ENCODE measurements at regions of chr6 and their contacts with region 1.

Region 1: DNA sequence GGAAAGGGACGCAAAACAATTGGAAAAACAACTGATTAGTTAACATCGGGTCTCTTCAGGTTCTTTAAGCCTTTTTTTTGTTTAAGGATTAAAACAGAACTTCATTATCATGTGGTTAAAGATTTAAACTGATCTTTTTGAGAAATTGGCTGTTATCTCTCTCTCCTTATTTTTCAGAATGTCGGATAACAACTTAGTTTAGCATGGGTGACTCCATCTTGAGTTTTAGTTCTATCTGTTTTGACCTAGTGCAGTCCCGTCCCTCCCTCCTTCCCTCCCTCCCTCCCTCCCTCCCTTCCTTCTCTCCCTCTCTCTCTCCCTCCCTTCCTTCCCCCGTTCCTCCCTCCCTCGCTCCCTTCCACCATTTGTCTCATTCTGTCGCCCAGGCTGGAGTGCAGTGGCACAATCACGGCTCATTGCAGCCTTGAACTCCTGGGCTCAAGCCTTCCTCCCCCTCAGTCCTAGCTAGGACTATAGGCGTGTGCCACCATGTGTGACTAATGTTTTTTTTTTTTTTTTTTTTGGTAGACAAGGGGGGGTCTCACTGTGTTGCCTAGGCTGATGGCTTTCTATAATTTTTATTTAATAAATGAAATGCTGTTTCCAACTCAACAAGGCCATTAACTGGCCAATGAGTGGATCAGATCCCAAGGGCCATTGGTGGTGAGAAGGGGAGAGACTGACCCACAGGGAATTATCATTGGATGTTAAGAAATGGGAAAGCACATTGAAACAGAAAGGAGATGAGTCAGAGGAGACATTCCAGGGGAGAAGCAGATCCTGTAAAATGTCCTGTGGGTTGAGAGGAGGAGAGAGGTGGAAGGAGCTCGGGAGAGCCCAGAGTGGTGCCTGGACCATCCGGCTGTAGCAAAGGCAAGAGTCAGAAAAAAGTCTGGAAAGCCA is 13.6 kb downstream of the BAK1 start:
- DNase-seq: no peak
- H3K4me3 Mint-ChIP-seq: no peak overlapping the region
- H3K27ac Mint-ChIP-seq: no peak overlapping the region
- H3K4me1 Mint-ChIP-seq: peaks cover 30% of the 10 kb centered on the region
- H3K27me3 Mint-ChIP-seq: no peaks in the 10 kb centered on the region

Region 2: DNA sequence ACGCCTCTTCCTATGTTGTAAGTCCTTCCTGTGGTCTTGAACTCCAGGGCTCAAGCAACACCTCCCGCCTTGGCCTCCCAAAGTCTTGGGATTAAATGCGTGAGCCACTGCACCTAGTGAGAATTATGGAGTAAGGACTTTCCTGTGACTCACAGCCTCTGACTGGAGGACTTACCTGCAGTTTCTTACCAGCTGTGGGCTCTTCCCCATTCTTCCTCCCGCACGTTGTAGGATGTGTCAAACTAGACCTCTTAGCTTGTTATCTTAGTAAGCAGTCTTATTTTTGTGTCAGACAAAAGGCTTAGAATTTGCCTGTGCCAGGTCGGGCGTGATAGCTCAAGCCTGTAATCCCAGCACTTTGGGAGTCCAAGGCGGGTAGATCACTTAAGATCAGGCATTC is 17.2 kb before region 1 on chr6:
- CTCF ChIA-PET with region 1: interaction called, 13 read pairs
- POLR2A ChIA-PET with region 1: interaction called, 3 read pairs
- DNase-seq: no peak
- H3K4me3 Mint-ChIP-seq: no peak overlapping the region
- H3K27ac Mint-ChIP-seq: peak overlapping the region; percentile 27
- H3K4me1 Mint-ChIP-seq: peaks cover 27% of the 10 kb centered on the region
- H3K27me3 Mint-ChIP-seq: no peaks in the 10 kb centered on the region

Region 3: DNA sequence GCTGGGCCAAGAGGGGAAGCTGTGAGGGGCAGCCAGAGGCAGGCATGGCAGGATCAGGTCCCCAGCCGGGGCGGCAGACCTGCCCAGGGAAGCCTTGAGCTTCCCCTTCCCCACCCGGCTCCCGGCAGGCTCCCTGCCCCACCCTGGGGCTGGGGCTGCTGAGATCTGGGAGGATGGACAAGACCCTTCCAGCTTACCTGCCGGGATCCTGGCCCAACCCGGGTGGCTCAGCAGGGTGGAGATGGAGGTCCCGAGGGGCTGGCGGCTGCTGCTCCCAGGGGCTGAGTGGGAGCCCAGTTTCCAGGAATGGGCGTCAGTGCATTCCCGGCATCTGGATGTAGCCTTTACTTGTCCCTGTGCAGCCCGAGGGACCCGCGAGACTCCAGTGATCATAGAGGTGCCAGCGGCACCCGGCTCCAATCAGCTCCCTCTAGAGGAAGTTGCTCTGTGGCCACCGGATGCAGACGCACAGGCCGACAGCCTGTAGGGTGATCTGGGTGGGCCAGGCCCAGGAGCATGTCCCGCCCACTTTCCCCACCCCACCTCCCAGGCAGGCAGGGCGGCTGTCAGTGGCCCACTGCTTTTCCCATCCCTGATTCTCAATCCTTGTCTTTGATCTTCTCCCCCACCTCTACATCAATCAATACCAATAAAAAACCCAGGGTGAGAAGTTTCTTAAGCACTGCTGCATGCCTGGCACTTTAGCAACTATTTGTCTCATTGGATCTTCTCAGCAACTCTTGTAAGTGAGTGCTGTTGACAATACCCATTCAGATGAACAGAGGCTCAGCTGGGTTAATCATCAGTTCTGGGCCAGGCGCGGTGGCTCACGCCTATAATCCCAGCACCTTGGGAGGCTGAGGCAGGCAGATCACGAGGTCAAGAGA is 13.6 kb after region 1 on chr6 and contains the start of gene BAK1:
- CTCF ChIA-PET with region 1: interaction called, 7 read pairs
- POLR2A ChIA-PET with region 1: interaction called, 15 read pairs
- DNase-seq: peak; percentile 90
- H3K4me3 Mint-ChIP-seq: peak within 1 kb of the TSS; percentile 95
- H3K27ac Mint-ChIP-seq: peak within 1 kb of the TSS; percentile 94
- H3K4me1 Mint-ChIP-seq: peaks cover 48% of the 10 kb centered on the region
- H3K27me3 Mint-ChIP-seq: no peaks in the 10 kb centered on the region
- total RNA-seq, gene BAK1: 69.2 to 77.6 TPM

Region 4: DNA sequence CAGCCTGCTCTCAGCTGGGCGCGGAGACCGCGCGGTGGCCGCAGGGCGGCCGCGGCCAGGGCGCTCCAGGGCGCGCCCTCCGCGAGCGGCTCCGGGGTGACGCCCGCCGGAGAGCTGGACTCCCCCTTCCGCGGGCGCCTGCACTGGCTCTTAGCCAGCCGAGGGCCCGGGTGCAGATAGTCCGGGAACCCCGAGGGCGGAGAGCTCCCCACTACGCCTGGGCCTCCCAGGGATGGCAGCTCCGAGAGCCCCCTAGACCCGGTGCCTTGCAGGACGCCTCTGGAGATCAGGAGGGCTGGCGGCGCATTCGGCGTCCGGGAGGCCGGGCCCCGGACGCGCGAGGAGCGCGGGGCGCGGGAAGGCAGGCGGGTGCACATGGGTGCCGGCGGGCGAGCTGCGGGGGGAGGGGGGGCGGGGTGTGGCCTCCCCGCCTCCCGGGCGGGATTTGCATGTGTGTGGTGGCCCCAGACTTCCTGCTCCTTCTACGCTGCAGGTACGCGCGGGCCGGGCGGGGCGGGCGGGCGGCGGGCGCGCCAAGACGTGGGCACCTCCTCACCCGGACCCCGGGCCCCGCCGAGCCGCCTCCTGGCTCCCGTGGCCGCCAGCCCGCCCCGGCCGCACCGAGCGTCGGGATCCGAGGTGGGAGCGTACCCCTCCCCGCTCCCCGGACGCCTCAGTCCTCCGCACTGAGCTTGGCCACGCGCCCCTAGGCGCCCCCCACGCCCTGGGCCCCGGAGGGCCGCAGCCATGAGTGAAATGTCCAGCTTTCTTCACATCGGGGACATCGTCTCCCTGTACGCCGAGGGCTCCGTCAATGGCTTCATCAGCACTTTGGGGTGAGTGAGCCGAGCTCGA is 54.6 kb after region 1 on chr6 and contains the start of gene ITPR3:
- CTCF ChIA-PET with region 1: no interaction called
- POLR2A ChIA-PET with region 1: no interaction called
- DNase-seq: peak; percentile 81
- H3K4me3 Mint-ChIP-seq: peak within 1 kb of the TSS; percentile 93
- H3K27ac Mint-ChIP-seq: peak within 1 kb of the TSS; percentile 95
- H3K4me1 Mint-ChIP-seq: peaks cover 55% of the 10 kb centered on the region
- H3K27me3 Mint-ChIP-seq: no peaks in the 10 kb centered on the region
- total RNA-seq, gene ITPR3: 64.2 to 65.8 TPM

Region 5: GRCh38 chr6:33717934-33718455 is 151.6 kb after region 1 on chr6:
- CTCF ChIA-PET with region 1: no interaction called
- POLR2A ChIA-PET with region 1: no interaction called
- DNase-seq: no peak
- H3K4me3 Mint-ChIP-seq: no peak overlapping the region
- H3K27ac Mint-ChIP-seq: no peak overlapping the region
- H3K4me1 Mint-ChIP-seq: no peaks in the 10 kb centered on the region
- H3K27me3 Mint-ChIP-seq: peaks cover 21% of the 10 kb centered on the region

Measured in activated CD4-positive, alpha-beta T cell treated with anti-CD3 and anti-CD28 coated beads, Interleukin-2, amount 10 ng/mL, durations not matched to agents 7 days and 5 days (primary cell).